Calu3 (cell line): ENCODE measurements at regions of chr11 and their contacts with region 1.

Region 1: GRCh38 chr11:13210424-13210823 is 67.2 kb upstream of the BMAL1 start:
- DNase-seq: peak; percentile 68
- H3K4me3 Mint-ChIP-seq: no peak overlapping the region
- H3K27ac Mint-ChIP-seq: no peak overlapping the region
- H3K4me1 Mint-ChIP-seq: peaks cover 32% of the 10 kb centered on the region
- H3K27me3 Mint-ChIP-seq: no peaks in the 10 kb centered on the region
- CTCF ChIP-seq: peak; percentile 42

Region 2: GRCh38 chr11:12963792-12964536 is 246.5 kb before region 1 on chr11:
- CTCF ChIA-PET with region 1: interaction called, 6 read pairs
- intact Hi-C with region 1: loop called (anchors 1 kb)
- DNase-seq: peak; percentile 84
- H3K4me3 Mint-ChIP-seq: no peak overlapping the region
- H3K27ac Mint-ChIP-seq: no peak overlapping the region
- H3K4me1 Mint-ChIP-seq: peaks cover 16% of the 10 kb centered on the region
- H3K27me3 Mint-ChIP-seq: no peaks in the 10 kb centered on the region
- CTCF ChIP-seq: peak; percentile 87

Region 3: GRCh38 chr11:13126430-13126829 is 84.0 kb before region 1 on chr11:
- CTCF ChIA-PET with region 1: no interaction called
- intact Hi-C with region 1: no loop called
- DNase-seq: no peak
- H3K4me3 Mint-ChIP-seq: no peak overlapping the region
- H3K27ac Mint-ChIP-seq: no peak overlapping the region
- H3K4me1 Mint-ChIP-seq: no peaks in the 10 kb centered on the region
- H3K27me3 Mint-ChIP-seq: no peaks in the 10 kb centered on the region
- CTCF ChIP-seq: no peak

Region 4: GRCh38 chr11:13238879-13239514 is 28.6 kb after region 1 on chr11:
- CTCF ChIA-PET with region 1: interaction called, 4 read pairs
- intact Hi-C with region 1: loop called (anchors 1 kb)
- DNase-seq: peak; percentile 68
- H3K4me3 Mint-ChIP-seq: no peak overlapping the region
- H3K27ac Mint-ChIP-seq: no peak overlapping the region
- H3K4me1 Mint-ChIP-seq: peaks cover 10% of the 10 kb centered on the region
- H3K27me3 Mint-ChIP-seq: peaks cover 14% of the 10 kb centered on the region
- CTCF ChIP-seq: peak; percentile 82

Region 5: GRCh38 chr11:13283636-13284035 is 73.2 kb after region 1 on chr11:
- CTCF ChIA-PET with region 1: no interaction called
- intact Hi-C with region 1: no loop called
- DNase-seq: no peak
- H3K4me3 Mint-ChIP-seq: no peak overlapping the region
- H3K27ac Mint-ChIP-seq: no peak overlapping the region
- H3K4me1 Mint-ChIP-seq: peaks cover 39% of the 10 kb centered on the region
- H3K27me3 Mint-ChIP-seq: peaks cover 32% of the 10 kb centered on the region
- CTCF ChIP-seq: no peak

Region 6: GRCh38 chr11:13335319-13335718 is 124.9 kb after region 1 on chr11:
- CTCF ChIA-PET with region 1: interaction called, 10 read pairs
- intact Hi-C with region 1: no loop called
- DNase-seq: peak; percentile 73
- H3K4me3 Mint-ChIP-seq: no peak overlapping the region
- H3K27ac Mint-ChIP-seq: peak overlapping the region; percentile 4
- H3K4me1 Mint-ChIP-seq: peaks cover 48% of the 10 kb centered on the region
- H3K27me3 Mint-ChIP-seq: no peaks in the 10 kb centered on the region
- CTCF ChIP-seq: peak; percentile 76

Region 7: DNA sequence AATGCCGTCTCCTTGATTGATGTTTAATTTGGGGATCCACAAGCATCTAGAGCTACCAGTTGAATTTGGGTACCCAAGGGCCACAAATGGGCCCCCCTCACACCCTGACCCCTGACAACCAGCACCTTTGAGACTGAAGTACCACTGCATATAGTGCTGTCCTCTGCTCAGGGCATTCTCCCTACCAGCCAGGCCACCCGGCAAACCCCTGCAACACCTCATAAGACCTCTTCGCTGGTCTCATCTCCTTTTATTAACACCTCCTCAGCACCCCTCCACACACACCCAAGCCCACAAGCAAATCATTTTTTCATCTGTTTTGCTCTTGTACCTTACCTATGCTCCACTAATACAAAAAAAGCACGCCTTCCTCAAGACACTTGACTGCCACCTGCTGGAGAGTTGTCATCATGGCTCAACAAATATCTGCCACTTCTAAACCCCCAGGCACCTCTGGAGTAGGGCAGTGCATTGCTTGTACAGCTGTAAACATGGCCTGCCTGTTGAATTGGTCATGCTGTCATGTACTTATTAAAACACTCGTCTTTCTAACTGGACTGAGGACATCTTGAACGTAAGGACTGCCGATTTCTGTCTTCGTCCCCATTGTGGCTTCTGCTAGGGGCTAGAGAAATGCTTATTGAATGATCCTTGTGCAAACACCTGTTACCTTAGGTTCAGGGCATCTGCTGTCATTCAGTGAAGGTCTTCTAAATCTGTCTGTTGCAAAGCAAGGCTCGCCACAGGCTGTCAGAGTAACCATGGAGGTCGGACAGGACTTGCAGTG is 133.7 kb after region 1 on chr11:
- CTCF ChIA-PET with region 1: interaction called, 12 read pairs
- intact Hi-C with region 1: loop called (anchors 1 kb)
- DNase-seq: peak; percentile 75
- H3K4me3 Mint-ChIP-seq: no peak overlapping the region
- H3K27ac Mint-ChIP-seq: no peak overlapping the region
- H3K4me1 Mint-ChIP-seq: peaks cover 26% of the 10 kb centered on the region
- H3K27me3 Mint-ChIP-seq: no peaks in the 10 kb centered on the region
- CTCF ChIP-seq: peak; percentile 80

Region 8: GRCh38 chr11:13384908-13385640 is 174.7 kb after region 1 on chr11:
- CTCF ChIA-PET with region 1: interaction called, 8 read pairs
- intact Hi-C with region 1: loop called (anchors 1 kb)
- DNase-seq: peak; percentile 32
- H3K4me3 Mint-ChIP-seq: no peak overlapping the region
- H3K27ac Mint-ChIP-seq: no peak overlapping the region
- H3K4me1 Mint-ChIP-seq: no peaks in the 10 kb centered on the region
- H3K27me3 Mint-ChIP-seq: no peaks in the 10 kb centered on the region
- CTCF ChIP-seq: peak; percentile 49

Region 9: DNA sequence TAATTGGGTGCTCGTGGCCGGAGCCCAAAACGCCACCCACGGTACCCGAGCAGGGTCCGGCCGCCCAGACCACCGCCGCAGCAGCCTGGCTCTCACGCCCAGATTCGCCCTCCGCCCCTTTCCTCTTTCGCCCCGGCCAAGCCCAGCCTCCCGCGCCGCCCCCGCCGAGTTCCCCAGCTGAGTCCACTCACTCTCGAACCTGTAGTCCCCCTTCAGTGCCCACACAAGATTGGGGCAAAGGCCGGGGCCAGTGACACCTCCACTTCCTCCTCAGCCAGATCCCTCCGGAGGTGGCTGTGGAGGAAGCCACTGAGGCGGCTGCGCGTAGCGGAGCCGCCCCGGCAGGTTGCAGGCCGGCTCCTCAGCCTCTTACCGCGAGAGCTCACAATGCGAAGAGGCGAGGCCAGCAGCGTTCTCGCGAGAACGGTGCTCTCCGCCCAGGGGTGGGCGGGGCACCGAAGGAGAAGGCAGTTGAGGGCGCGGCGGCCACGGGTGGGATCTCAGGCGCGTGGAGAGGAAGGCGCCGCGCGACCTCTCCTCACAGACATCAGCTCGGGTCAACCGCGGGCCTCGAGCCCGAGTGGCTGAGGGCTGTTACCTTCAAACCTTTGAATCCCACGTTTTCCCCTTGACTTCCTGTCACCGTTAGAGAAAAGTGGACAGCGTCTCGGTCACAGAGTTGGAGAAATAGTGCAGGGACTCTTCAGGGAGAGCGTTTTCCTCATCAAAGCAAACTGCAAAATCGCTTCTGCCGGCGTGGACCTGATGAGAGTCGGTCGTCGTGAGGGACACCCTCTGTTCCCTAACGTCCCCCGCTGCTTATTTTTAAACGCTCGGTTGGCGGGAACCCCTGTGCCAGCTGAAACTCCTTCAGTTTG is 252.7 kb after region 1 on chr11 and contains the start of gene BTBD10:
- CTCF ChIA-PET with region 1: no interaction called
- intact Hi-C with region 1: loop called (anchors 10 kb)
- DNase-seq: peak; percentile 93
- H3K4me3 Mint-ChIP-seq: peak within 1 kb of the TSS; percentile 99
- H3K27ac Mint-ChIP-seq: peak within 1 kb of the TSS; percentile 90
- H3K4me1 Mint-ChIP-seq: peaks cover 33% of the 10 kb centered on the region
- H3K27me3 Mint-ChIP-seq: no peaks in the 10 kb centered on the region
- CTCF ChIP-seq: no peak
- total RNA-seq, gene BTBD10: 29.7 and 33.3 TPM in 2 replicates